ENCODE measurements at regions of chr22 and their contacts with region 1.

Region 1: DNA sequence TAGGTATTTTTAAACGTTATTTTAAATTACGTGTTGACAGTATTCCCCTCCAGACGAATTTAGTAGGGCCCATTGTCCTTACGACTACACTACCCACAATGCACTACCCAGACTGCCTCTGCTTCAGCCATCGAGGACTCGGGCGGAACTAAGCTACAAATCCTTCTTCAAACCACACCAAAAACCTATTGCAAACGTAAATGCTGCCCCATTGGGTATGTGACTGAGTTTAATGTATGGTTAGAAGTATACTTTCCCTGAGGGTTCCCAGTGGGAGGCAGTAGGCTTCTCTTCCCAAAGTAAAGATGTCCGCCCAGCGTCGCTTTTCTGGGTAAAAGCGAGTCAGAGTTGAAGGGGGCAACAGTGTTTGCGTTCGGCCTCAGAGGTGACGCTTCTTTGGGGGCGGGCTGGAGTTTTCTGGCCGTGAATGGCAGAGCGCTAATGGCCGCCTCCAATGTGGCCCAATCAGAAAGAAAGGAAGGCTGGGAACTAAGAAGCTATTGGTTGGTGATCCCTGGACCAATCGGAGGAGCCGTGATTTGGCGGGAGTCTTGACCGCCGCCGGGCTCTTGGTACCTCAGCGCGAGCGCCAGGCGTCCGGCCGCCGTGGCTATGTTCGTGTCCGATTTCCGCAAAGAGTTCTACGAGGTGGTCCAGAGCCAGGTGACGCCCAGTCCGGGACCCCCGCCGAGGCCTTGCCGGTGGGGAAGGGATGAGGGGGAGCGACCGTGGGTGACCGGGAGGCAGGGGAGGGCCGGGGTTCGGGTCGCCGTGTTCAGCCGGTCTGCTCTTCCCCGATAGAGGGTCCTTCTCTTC is at the start of gene CDC45:
- DNase-seq: peak; percentile 93
- H3K4me3 Mint-ChIP-seq: peak within 1 kb of the TSS; percentile 97
- H3K27ac Mint-ChIP-seq: peak within 1 kb of the TSS; percentile 99
- H3K4me1 Mint-ChIP-seq: peaks cover 47% of the 10 kb centered on the region
- H3K27me3 Mint-ChIP-seq: no peaks in the 10 kb centered on the region
- total RNA-seq, gene CDC45: 104 and 116 TPM in 2 replicates

Region 2: GRCh38 chr22:19122143-19122751 is 357.3 kb before region 1 on chr22 and contains the start of gene DGCR2:
- intact Hi-C with region 1: loop called (anchors 1 kb)
- DNase-seq: peak; percentile 91
- H3K4me3 Mint-ChIP-seq: peak within 1 kb of the TSS; percentile 89
- H3K27ac Mint-ChIP-seq: peak within 1 kb of the TSS; percentile 64
- H3K4me1 Mint-ChIP-seq: peaks cover 47% of the 10 kb centered on the region
- H3K27me3 Mint-ChIP-seq: peaks cover 1% of the 10 kb centered on the region
- total RNA-seq, gene DGCR2: 23.2 and 24.1 TPM in 2 replicates

Region 3: DNA sequence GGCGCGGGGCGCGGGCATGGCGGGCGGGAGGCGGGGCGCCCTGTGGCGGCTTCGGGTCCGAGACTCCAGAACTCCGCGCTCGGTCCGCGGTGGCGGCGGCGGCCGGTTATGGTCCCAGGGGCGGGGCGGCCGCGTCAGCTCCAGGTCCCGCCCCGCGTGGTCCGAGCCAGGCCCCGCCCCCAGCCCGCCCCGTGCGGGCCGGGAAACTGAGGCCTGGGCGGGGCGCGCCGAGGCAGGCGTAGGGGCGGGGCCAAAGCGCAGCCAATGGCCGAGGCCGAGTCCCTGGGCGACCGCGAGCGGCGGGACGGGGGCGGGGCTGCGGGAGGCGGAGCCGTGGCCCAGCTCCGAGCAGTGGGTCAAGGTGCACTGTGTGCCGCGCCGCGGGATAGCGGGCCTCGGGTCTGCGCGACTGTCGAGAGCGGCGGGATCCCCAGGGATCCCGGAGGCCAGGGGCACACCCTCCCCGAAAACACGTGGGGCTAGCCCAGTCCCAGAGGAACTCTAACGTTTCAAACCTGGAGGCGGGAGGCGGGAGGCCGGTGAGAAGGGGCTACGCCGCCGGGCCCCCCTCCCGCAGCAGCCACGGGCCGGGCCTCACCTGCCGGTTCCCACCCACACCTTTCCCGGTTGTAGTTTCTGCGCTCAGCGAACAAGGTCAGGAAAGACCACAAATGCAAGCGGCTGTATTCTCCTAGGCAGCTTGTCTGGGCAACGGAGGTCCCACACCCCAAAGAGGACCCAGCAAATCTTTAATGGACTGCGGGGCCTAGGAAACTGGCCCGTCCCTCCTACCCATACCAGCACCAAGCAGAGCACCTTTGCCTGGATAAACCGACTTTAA is 300.7 kb before region 1 on chr22 and contains the start of gene SLC25A1:
- intact Hi-C with region 1: loop called (anchors 1 kb)
- DNase-seq: peak; percentile 86
- H3K4me3 Mint-ChIP-seq: peak within 1 kb of the TSS; percentile 85
- H3K27ac Mint-ChIP-seq: peak within 1 kb of the TSS; percentile 68
- H3K4me1 Mint-ChIP-seq: peaks cover 24% of the 10 kb centered on the region
- H3K27me3 Mint-ChIP-seq: peaks cover 4% of the 10 kb centered on the region
- total RNA-seq, gene SLC25A1: 31.7 and 34.0 TPM in 2 replicates

Region 4: DNA sequence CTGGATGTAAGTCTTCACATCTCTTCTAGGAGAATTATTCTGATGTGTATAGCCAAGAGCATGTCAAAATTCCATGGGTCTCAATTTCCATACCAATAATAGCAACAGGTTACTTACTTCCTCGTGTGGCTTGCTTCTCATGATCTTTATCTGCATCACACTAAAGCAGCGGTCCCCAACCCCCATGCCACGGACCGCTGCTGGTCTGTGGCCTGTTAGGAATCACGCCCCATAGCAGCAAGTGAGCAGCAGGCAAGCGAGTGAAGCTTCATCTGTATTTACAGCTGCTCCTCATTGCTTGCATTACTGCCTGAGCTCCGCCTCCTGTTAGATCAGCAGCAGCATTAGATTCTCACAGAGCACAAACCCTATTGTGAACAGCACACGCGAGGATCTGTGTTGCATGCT is 272.2 kb before region 1 on chr22:
- intact Hi-C with region 1: no loop called
- DNase-seq: no peak
- H3K4me3 Mint-ChIP-seq: no peak overlapping the region
- H3K27ac Mint-ChIP-seq: no peak overlapping the region
- H3K4me1 Mint-ChIP-seq: no peaks in the 10 kb centered on the region
- H3K27me3 Mint-ChIP-seq: peaks cover 14% of the 10 kb centered on the region

Region 5: GRCh38 chr22:19447388-19448075 is 32.0 kb before region 1 on chr22 and contains the start of gene C22orf39:
- intact Hi-C with region 1: loop called (anchors 1 kb)
- DNase-seq: peak; percentile 88
- H3K4me3 Mint-ChIP-seq: peak within 1 kb of the TSS; percentile 95
- H3K27ac Mint-ChIP-seq: peak within 1 kb of the TSS; percentile 94
- H3K4me1 Mint-ChIP-seq: peaks cover 46% of the 10 kb centered on the region
- H3K27me3 Mint-ChIP-seq: no peaks in the 10 kb centered on the region
- total RNA-seq, gene C22orf39: 22.8 and 26.8 TPM in 2 replicates

Region 6: GRCh38 chr22:19629720-19630419 is 150.3 kb after region 1 on chr22:
- intact Hi-C with region 1: loop called (anchors 1 kb)
- DNase-seq: peak; percentile 77
- H3K4me3 Mint-ChIP-seq: no peak overlapping the region
- H3K27ac Mint-ChIP-seq: no peak overlapping the region
- H3K4me1 Mint-ChIP-seq: peaks cover 5% of the 10 kb centered on the region
- H3K27me3 Mint-ChIP-seq: peaks cover 8% of the 10 kb centered on the region

Region 7: DNA sequence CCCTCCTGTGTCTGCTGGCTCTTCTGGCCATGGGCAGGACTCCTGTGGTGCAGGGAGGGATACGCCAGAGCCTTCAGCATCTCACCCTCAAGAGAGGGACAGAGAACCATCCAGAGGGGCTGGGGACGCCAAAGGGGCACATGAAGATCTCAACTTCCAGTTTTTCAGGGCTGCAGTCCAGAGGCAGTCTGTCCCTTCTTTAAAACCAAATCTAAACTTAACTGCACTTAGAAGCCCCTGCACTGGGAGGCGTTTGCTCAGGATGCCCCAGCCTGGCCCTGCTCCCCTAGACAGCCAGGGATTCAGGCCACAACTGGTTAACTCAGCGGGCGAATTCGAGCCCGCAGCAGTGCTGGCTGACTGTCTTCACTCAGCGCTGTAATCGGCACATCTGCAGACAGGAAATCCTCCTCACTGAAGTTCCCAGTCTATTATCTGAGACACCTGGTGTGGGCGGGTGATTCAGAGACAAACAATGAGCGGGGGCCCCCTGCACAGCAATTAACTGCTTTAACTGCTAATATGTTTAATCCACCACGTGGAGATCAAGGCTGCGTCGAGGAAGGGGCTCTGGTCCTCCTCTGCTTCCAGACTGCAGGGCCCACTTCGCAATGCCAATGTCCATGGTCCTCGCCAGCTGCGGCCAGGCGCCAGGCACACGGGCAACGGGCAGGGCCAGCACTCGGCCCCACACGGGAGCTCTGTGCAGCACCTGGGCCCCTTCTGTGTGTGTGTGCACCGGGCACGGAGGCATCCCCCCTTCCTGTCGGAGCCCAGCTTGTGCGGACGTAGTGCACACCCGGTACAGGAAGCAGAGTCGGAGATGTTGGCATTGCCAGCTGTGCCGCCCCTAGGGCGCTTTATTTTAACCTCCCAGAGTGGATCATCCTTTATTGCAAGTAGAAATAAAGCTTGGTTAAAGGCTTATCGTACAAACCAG is 412.0 kb after region 1 on chr22:
- intact Hi-C with region 1: loop called (anchors 5 kb)
- DNase-seq: peak; percentile 58
- H3K4me3 Mint-ChIP-seq: peak overlapping the region; percentile 77
- H3K27ac Mint-ChIP-seq: peak overlapping the region; percentile 95
- H3K4me1 Mint-ChIP-seq: peaks cover 45% of the 10 kb centered on the region
- H3K27me3 Mint-ChIP-seq: no peaks in the 10 kb centered on the region